GM23248 (cell line): ENCODE measurements at regions of chr11 and their contacts with region 1.

Region 1: GRCh38 chr11:128884703-128885338 is 6.3 kb upstream of the KCNJ5 start:
- DNase-seq: peak; percentile 69
- H3K4me3 ChIP-seq: no peak overlapping the region
- H3K27ac ChIP-seq: no peak overlapping the region
- H3K4me1 ChIP-seq: no peaks in the 10 kb centered on the region
- H3K27me3 ChIP-seq: peaks cover 28% of the 10 kb centered on the region

Region 2: DNA sequence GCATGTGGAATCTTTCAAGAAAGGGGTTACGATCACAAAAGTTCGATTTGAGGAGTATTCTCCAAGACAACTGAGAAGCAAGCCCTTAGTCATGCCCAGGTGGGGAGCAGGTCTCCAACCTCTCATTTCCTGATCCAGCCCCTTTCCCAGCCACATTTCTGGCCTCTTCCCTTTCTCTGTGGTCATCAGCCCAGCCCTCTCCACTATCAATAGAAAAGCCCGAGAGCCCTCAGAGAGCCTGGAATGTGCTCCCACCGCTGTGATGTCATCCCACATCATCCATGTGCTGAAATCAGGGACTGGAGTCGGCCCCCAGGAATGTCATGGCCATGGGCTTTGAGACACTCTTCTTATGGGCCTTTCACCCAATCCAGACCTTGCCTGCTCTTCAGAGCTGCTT is 80.3 kb before region 1 on chr11:
- in situ Hi-C with region 1: no loop called
- DNase-seq: peak; percentile 49
- H3K4me3 ChIP-seq: no peak overlapping the region
- H3K27ac ChIP-seq: no peak overlapping the region
- H3K4me1 ChIP-seq: peaks cover 38% of the 10 kb centered on the region
- H3K27me3 ChIP-seq: no peaks in the 10 kb centered on the region

Region 3: DNA sequence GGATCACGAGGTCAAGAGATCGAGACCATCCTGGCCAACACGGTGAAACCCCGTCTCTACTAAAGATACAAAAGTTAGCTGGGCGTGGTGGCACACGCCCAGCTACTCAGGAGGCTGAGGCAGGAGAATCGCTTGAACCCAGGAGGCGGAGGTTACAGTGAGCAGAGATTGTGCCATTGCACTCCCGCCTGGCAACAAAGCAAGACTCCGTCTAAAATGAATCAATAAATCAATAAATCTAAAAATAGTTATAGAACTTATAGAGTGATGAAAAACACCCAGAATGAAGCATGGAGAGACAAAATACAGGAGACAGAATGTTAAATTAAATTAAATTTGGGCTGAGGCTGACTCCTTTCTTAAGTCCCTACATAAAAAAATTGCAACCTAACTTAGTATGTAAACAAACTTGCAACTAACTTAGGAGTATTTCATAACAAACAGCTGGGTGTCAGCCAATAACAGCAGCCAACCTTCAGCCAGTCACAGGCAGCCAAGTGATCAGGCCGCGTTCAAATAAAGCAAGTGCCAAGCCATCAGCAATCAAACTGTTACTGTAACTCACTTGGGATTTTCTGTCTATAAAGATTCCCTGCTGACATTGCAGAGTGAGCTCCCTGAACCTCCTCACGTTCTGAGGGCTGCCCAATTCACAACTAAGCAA is 65.1 kb after region 1 on chr11:
- in situ Hi-C with region 1: loop called (anchors 5 kb)
- DNase-seq: peak; percentile 15
- H3K4me3 ChIP-seq: no peak overlapping the region
- H3K27ac ChIP-seq: no peak overlapping the region
- H3K4me1 ChIP-seq: no peaks in the 10 kb centered on the region
- H3K27me3 ChIP-seq: no peaks in the 10 kb centered on the region; the same call in 1 of the 2 replicates

Region 4: GRCh38 chr11:129067454-129067853 is 182.6 kb after region 1 on chr11:
- in situ Hi-C with region 1: no loop called
- DNase-seq: no peak
- H3K4me3 ChIP-seq: no peak overlapping the region
- H3K27ac ChIP-seq: no peak overlapping the region
- H3K4me1 ChIP-seq: no peaks in the 10 kb centered on the region
- H3K27me3 ChIP-seq: no peaks in the 10 kb centered on the region

Region 5: GRCh38 chr11:129331871-129332274 is 447.1 kb after region 1 on chr11:
- in situ Hi-C with region 1: loop called (anchors 5 kb)
- DNase-seq: peak; percentile 80
- H3K4me3 ChIP-seq: no peak overlapping the region
- H3K27ac ChIP-seq: no peak overlapping the region
- H3K4me1 ChIP-seq: no peaks in the 10 kb centered on the region
- H3K27me3 ChIP-seq: no peaks in the 10 kb centered on the region

Region 6: DNA sequence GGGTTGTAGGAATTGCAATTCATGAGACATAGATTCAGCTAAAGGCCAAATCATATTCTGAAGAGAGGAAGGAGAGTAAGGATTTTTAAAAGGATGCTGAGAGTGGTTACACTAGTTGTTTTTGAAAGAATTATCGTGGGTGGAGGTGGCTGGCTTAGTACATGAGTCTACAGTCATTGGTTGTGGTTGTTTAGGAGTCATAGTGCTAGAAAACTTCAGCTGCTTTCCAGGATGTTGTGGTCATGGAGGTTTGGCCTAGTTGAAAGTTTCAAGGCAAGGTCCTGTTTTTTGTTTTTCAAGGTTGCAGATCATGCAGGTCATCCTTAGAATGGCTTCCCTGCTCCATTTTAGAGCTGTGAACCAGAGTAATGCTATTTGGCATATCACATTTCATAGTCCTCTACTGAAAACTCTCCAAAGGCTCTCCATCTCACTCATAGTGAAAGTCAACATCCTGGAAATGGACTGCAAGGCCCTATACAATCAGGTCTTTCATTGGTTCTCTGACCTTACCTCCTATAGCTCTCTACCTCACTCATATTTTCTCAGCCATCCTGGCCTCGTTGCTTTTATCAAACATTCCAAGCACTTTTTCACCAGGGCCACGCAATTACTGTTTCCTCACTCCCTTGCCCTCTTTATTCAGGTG is 1456.0 kb after region 1 on chr11:
- in situ Hi-C with region 1: no loop called
- DNase-seq: peak; percentile 44
- H3K4me3 ChIP-seq: no peak overlapping the region
- H3K27ac ChIP-seq: no peak overlapping the region
- H3K4me1 ChIP-seq: no peaks in the 10 kb centered on the region
- H3K27me3 ChIP-seq: no peaks in the 10 kb centered on the region; the same call in 1 of the 2 replicates